K562 (cell line): ENCODE measurements at regions of chr11 and their contacts with region 1.

Region 1: DNA sequence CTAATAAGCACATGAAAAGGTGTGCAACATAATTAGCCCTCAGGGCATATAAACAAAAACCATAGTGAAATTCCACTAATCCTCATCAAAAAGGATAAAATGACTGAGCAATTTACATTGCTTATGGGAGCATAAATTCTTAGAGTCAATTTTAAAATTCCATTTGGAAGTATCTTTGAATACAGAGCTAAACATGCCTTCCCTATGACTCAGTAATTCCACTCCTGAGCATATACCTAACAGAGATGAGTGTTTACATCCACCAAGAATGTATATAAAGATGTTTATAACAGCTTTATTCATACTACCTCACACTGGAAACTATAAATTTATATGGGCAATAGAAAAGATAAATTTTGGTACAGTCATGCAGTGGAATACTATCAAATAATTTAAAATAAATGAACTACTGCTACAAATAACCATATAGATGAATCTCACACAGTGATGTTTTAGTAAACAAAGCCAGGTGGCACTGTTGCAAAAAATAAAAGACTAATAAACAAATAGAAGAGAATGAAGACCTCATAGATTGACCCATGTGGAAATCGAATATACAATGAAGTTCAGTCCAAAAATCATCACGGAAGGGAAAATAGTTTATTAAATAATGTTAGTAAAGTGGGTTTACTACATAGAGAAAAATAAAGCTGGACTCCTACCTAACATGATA is 8.2 kb upstream of the OR2D2 start:
- DNase-seq: no peak
- ATAC-seq: 0 out of 3 replicates have a peak, but pooled peaks have one; percentile 41
- H3K4me3 ChIP-seq: no peak overlapping the region
- H3K27ac ChIP-seq: no peak overlapping the region
- H3K4me1 ChIP-seq: no peaks in the 10 kb centered on the region
- H3K27me3 ChIP-seq: no peaks in the 10 kb centered on the region
- CTCF ChIP-seq: peak in 1 of 3 experiments; percentile 43; a peak in 2 of 6 replicates
- EP300 ChIP-seq: no peak
- POLR2A ChIP-seq: no peak
- RAD21 ChIP-seq: peak; percentile 8 to 18; a peak in 1 of 4 replicates

Region 2: DNA sequence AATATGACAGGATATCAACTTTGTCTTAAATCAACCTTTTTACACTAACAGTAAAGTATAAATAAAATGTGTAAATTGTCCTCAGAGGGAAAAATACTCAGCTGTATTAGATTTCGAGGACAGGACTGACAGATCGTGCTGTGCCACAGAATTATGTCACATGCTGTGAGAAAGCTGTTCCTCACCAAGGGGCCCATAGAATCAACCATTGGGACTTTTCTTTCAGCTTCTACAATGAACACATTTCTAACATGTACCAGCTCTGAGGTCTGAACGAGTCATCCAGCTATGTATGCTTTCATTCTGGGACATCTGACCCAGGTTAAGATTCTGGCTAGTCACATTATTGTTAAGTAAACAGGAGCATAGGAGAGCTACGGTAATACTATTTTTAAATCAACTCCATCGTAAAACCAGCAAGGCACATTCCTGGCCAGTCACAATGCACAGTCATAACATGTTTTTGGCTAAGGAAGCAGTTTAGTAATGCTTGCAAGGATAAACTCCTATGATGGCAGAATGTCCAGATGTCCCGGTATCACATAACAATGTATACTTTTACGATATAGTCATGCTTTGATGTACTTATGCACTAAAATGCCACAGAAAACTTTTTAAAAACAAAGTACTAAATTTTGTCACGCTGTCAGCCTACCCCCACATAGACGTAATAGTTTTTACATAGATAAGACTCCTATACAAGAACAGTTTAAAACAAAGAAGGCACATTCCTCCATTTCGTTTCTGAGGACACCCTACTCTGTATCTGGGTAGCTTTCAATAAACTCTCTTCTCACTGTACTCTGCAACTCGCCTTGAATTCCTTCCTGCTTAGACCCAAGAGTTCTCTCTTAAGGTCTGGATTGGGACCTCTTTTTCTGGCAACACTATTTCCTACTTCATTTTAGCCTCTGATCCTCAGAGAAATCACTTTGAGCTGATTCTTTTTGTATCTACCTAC is 92.3 kb after region 1 on chr11:
- CTCF ChIA-PET with region 1: no interaction called
- POLR2A ChIA-PET with region 1: no interaction called
- in situ Hi-C with region 1: no loop called
- intact Hi-C with region 1: loop called (anchors 10 kb)
- DNase-seq: no peak
- ATAC-seq: no peak
- H3K4me3 ChIP-seq: no peak overlapping the region
- H3K27ac ChIP-seq: no peak overlapping the region
- H3K4me1 ChIP-seq: peaks cover 0 to 4% of the 10 kb centered on the region in 2 experiments; a peak in 1 of 5 replicates
- H3K27me3 ChIP-seq: no peaks in the 10 kb centered on the region
- CTCF ChIP-seq: no peak
- EP300 ChIP-seq: no peak
- POLR2A ChIP-seq: no peak
- RAD21 ChIP-seq: no peak